Endothelial cell of umbilical vein (primary cell): ENCODE measurements at regions of chr11 and their contacts with region 1.

Region 1: DNA sequence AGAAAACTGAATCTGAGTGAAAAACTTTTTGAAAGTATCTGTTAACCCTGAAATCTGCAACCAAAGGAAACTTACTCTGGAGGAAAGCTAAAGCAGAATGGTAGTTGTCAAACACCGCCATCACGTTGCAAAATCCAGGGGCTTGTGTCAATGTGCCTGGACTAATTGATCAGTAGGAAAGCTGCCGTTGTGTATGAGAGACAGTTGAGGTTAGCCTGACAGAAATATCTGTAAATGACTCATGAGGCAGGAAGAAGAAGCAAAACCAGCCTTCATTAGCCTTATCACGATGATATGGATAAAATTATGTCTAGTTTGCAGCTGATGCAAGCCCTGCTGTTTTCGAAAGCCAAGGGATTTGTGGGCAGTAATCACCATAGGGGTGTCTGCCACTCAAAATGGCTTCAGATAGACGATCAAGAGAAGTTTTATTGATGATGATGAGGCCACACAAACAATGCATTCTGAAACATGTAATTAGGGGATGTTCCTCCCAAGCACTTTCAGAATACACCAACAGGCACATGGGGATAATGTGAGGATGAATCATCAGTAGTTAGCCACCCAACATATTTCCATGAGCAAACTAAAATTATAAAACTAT is 8.9 kb downstream of the SCGB1A1 start:
- DNase-seq: no peak
- H3K4me3 ChIP-seq: no peak overlapping the region
- H3K27ac ChIP-seq: no peak overlapping the region
- H3K4me1 ChIP-seq: no peaks in the 10 kb centered on the region
- H3K27me3 ChIP-seq: peaks cover 0 to 3% of the 10 kb centered on the region in 2 experiments
- CTCF ChIP-seq: no peak
- POLR2A ChIP-seq: no peak

Region 2: GRCh38 chr11:60932605-60933356 is 1495.0 kb before region 1 on chr11:
- CTCF ChIA-PET with region 1: no interaction called
- POLR2A ChIA-PET with region 1: no interaction called
- dilution Hi-C with region 1: no loop called
- intact Hi-C with region 1: no loop called
- DNase-seq: no peak
- H3K4me3 ChIP-seq: no peak overlapping the region
- H3K27ac ChIP-seq: no peak overlapping the region
- H3K4me1 ChIP-seq: peaks cover 8% of the 10 kb centered on the region
- H3K27me3 ChIP-seq: no peaks in the 10 kb centered on the region
- CTCF ChIP-seq: no peak
- POLR2A ChIP-seq: no peak

Region 3: GRCh38 chr11:62411524-62411923 is 16.2 kb before region 1 on chr11:
- CTCF ChIA-PET with region 1: interaction called, 26 read pairs
- POLR2A ChIA-PET with region 1: interaction called, 3 read pairs
- dilution Hi-C with region 1: no loop called
- intact Hi-C with region 1: no loop called
- DNase-seq: no peak
- H3K4me3 ChIP-seq: no peak overlapping the region
- H3K27ac ChIP-seq: no peak overlapping the region
- H3K4me1 ChIP-seq: no peaks in the 10 kb centered on the region
- H3K27me3 ChIP-seq: no peaks in the 10 kb centered on the region
- CTCF ChIP-seq: no peak
- POLR2A ChIP-seq: no peak

Region 4: GRCh38 chr11:62472012-62472884 is 44.5 kb after region 1 on chr11:
- CTCF ChIA-PET with region 1: interaction called, 10 read pairs
- POLR2A ChIA-PET with region 1: no interaction called
- dilution Hi-C with region 1: no loop called
- intact Hi-C with region 1: no loop called
- DNase-seq: no peak
- H3K4me3 ChIP-seq: no peak overlapping the region
- H3K27ac ChIP-seq: no peak overlapping the region
- H3K4me1 ChIP-seq: no peaks in the 10 kb centered on the region
- H3K27me3 ChIP-seq: no peaks in the 10 kb centered on the region
- CTCF ChIP-seq: no peak
- POLR2A ChIP-seq: no peak

Region 5: GRCh38 chr11:62542750-62543567 is 115.2 kb after region 1 on chr11:
- CTCF ChIA-PET with region 1: interaction called, 377 read pairs
- POLR2A ChIA-PET with region 1: interaction called, 10 read pairs
- dilution Hi-C with region 1: no loop called
- intact Hi-C with region 1: loop called (anchors 1 kb)
- DNase-seq: peak; percentile 75
- H3K4me3 ChIP-seq: peak overlapping the region in 2 of 3 experiments; percentile 53 to 55
- H3K27ac ChIP-seq: peak overlapping the region; percentile 12
- H3K4me1 ChIP-seq: peaks cover 64% of the 10 kb centered on the region
- H3K27me3 ChIP-seq: no peaks in the 10 kb centered on the region
- CTCF ChIP-seq: peak; percentile 98 to 100
- POLR2A ChIP-seq: no peak

Region 6: DNA sequence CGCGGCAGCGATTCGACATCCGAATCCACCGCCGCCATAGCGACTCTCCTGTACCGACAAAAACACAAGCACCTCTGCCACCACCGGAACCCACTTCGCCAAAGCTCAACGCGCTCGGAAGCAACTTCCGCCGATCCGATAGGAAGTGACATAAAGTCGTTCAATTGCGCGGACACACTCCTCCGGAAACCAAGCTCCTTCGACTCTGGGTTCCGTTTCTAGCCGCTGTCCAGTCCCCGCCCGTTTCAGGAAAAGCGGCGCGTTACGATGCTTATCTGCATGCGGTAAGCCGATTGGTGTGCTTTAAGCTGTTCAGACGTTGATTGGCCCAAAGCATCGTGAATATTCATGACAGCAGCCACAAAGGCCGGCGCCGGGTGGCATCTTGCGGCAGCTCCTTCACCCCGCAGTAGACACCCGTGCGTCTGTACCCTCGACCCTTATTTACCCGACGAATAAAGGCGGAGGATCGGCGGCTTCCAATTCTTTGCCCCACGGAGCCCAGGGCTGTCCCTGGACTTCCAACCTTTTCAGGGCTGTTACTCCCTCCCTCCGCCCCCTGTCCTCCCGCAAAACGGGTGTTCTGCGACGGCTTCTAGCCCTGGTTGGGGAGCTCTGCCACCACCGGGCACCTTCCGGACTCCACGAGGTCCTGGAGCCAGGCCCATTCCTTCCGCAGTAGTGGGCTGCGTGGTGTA is 163.9 kb after region 1 on chr11 and contains the start of gene TUT1:
- CTCF ChIA-PET with region 1: interaction called, 52 read pairs
- POLR2A ChIA-PET with region 1: interaction called, 9 read pairs
- dilution Hi-C with region 1: no loop called
- intact Hi-C with region 1: no loop called
- DNase-seq: peak; percentile 99
- H3K4me3 ChIP-seq: peak within 1 kb of the TSS; percentile 67 to 87 (median 82)
- H3K27ac ChIP-seq: peak within 1 kb of the TSS; percentile 82
- H3K4me1 ChIP-seq: peaks cover 18% of the 10 kb centered on the region
- H3K27me3 ChIP-seq: no peaks in the 10 kb centered on the region
- CTCF ChIP-seq: no peak
- POLR2A ChIP-seq: peak; percentile 99
- total RNA-seq, gene TUT1: 16.9 and 17.8 TPM in 2 replicates